ENCODE measurements at regions of chr1 and their contacts with region 1.

Region 1: GRCh38 chr1:201447911-201448871 is 20.8 kb downstream of the PHLDA3 start:
- DNase-seq: peak; percentile 82
- H3K4me3 ChIP-seq: no peak overlapping the region
- H3K27ac ChIP-seq: peak overlapping the region in 3 of 4 donors; percentile 21 to 55 (median 21)
- H3K4me1 ChIP-seq: peaks cover 10 to 25% (median 12%) of the 10 kb centered on the region in 4 donors
- H3K27me3 ChIP-seq: no peaks in the 10 kb centered on the region
- CTCF ChIP-seq: peak; percentile 79 to 88 (median 86)
- EP300 ChIP-seq: no peak
- POLR2A ChIP-seq: no peak

Region 2: GRCh38 chr1:201329286-201329685 is 118.9 kb before region 1 on chr1:
- in situ Hi-C with region 1: no loop called
- intact Hi-C with region 1: no loop called
- DNase-seq: no peak
- H3K4me3 ChIP-seq: no peak overlapping the region
- H3K27ac ChIP-seq: no peak overlapping the region
- H3K4me1 ChIP-seq: no peaks in the 10 kb centered on the region
- H3K27me3 ChIP-seq: no peaks in the 10 kb centered on the region
- CTCF ChIP-seq: no peak
- EP300 ChIP-seq: no peak
- POLR2A ChIP-seq: no peak

Region 3: DNA sequence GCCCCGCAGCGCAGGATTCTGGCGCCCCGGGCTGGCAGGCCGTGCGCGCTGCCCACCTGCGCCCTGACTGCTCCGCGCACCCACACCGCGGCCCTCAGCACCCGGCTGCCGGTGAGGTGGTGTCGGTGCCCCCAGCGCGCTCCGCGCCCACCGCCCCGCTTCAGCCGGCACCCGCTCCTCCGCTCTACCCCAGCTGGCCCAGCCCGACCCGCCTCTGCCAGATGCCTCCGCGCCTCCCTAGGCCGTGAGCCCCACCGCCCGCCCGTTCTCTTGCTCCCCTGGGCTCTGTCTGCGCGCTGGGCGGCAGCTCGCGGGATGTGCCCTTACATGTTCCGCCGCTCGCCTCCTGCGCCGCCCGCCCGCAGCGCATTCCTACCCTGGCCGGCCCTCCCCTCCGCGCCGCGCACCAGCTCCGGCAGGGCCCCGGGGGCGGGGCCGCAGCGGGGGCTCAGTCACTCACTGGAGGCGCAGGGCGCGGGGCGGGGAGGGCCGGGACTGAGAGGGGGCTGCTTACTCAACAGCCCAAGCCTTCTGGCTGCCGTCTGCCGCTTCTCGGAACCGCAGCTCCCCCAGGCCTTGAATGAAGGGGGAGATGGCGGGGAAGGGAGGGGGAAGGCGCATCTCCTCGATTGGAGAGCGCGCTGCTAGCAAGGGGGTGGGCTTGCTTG is 20.8 kb after region 1 on chr1 and contains the start of gene PHLDA3:
- in situ Hi-C with region 1: no loop called
- intact Hi-C with region 1: no loop called
- DNase-seq: peak; percentile 81
- H3K4me3 ChIP-seq: peak within 1 kb of the TSS; percentile 61 to 70 (median 69)
- H3K27ac ChIP-seq: peak within 1 kb of the TSS; percentile 89 to 98 (median 94)
- H3K4me1 ChIP-seq: peaks cover 15 to 40% (median 33%) of the 10 kb centered on the region in 4 donors
- H3K27me3 ChIP-seq: peaks cover 26% of the 10 kb centered on the region
- CTCF ChIP-seq: peak in 1 of 5 experiments; percentile 23
- EP300 ChIP-seq: no peak
- POLR2A ChIP-seq: peak; percentile 79
- total RNA-seq, gene PHLDA3: 19.4 to 47.6 (median 31.5) TPM

Region 4: DNA sequence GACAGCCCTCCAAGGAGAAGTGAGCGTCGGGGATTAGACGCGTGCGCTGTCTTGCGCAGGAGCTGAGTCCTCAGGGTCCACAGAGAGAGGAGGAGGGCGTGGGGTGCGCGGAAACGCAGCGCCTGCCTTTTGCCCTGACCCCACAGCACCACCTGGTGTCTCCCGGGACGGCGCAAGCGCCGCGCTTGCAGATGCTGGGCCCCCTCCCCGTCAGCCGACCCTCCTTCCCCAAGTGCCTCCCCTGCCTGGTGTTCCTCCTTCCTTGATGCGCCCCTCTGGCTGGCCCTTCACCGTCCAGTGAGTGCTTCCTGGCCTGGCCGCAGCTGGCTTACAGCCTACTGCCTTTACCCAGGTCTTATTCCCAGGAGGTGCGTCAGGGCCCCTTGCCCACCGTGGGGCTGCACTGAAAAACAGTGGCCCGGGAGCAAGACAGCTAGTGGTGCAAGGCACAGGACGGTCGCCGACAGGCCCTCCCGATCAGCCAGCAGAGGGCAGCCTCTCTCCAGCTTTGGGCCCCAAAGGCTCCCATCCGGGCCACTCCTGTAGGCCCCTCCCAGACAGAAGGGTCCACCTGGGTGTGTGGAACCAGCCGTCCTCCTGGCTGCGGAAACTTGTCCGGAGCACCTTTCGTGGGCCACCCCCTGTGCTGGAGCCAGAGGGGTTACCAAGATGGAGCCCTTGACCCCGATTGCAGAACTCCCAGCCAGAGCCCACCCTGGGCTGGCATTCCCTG is 33.7 kb after region 1 on chr1:
- in situ Hi-C with region 1: no loop called
- intact Hi-C with region 1: loop called (anchors 5 kb)
- DNase-seq: peak; percentile 91
- H3K4me3 ChIP-seq: peak overlapping the region in 3 of 4 donors; percentile 13 to 37 (median 25)
- H3K27ac ChIP-seq: peak overlapping the region; percentile 78 to 97 (median 94)
- H3K4me1 ChIP-seq: peaks cover 11 to 29% (median 25%) of the 10 kb centered on the region in 4 donors
- H3K27me3 ChIP-seq: no peaks in the 10 kb centered on the region
- CTCF ChIP-seq: peak; percentile 86 to 95 (median 91)
- EP300 ChIP-seq: no peak
- POLR2A ChIP-seq: no peak

Region 5: DNA sequence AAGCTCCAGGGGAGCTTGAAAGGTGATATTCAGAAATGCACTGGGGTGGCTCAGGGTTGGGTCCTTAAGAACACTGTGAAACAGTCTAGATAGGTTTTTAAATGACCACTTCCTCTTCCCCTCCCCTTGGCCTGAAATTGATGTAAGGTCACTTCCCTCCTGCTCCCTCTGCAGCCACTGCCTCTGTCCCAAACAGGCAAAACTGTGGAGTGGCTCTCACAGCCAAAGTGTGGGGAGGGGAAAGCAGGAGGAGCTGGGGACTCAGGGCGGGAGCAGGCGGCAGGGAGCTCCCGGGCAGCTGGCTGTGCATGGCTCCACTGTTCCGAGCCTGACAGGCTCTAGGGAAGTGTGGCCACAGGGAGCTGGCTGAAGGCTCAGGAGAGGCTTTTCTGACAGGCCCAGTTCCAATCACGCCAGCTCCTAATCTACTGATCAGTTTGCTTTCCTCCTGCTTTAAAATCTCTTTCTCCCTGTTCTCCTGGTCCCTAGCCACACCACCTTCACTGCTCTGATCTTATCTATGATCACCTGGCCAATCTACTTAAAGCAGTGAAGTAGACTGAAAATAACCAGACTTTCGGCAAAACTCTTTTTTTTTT is 63.8 kb after region 1 on chr1:
- in situ Hi-C with region 1: no loop called
- intact Hi-C with region 1: loop called (anchors 5 kb)
- DNase-seq: peak; percentile 31
- H3K4me3 ChIP-seq: no peak overlapping the region
- H3K27ac ChIP-seq: peak overlapping the region; percentile 71 to 97 (median 94)
- H3K4me1 ChIP-seq: peaks cover 3 to 34% (median 28%) of the 10 kb centered on the region in 4 donors
- H3K27me3 ChIP-seq: no peaks in the 10 kb centered on the region
- CTCF ChIP-seq: no peak
- EP300 ChIP-seq: no peak
- POLR2A ChIP-seq: no peak